Heart left ventricle (tissue), 16 donors: ENCODE measurements at regions of chr15 and their contacts with region 1.

Region 1: GRCh38 chr15:52256366-52256765 is 39.2 kb downstream of the MYO5C start:
- DNase-seq: peak in 4 of 5 donors; percentile 38 to 66 (median 60)
- ATAC-seq: peak; percentile 41 to 67 (median 54)
- H3K4me3 ChIP-seq: peak overlapping the region in 1 of 12 donors; percentile 3
- H3K27ac ChIP-seq: no peak overlapping the region
- H3K4me1 ChIP-seq: peaks cover 0 to 26% (median 12%) of the 10 kb centered on the region in 12 donors
- H3K27me3 ChIP-seq: no peaks in the 10 kb centered on the region
- CTCF ChIP-seq: peak; percentile 67 to 83 (median 74)
- POLR2A ChIP-seq: no peak

Region 2: GRCh38 chr15:52179278-52180195 is 76.8 kb before region 1 on chr15:
- intact Hi-C with region 1: no loop called
- DNase-seq: peak; percentile 72 to 91 (median 83)
- ATAC-seq: peak; percentile 70 to 92 (median 89)
- H3K4me3 ChIP-seq: peak overlapping the region; percentile 61 to 93 (median 74)
- H3K27ac ChIP-seq: peak overlapping the region; percentile 45 to 89 (median 74)
- H3K4me1 ChIP-seq: peaks cover 0 to 17% (median 8%) of the 10 kb centered on the region in 12 donors
- H3K27me3 ChIP-seq: no peaks in the 10 kb centered on the region
- CTCF ChIP-seq: no peak
- POLR2A ChIP-seq: no peak

Region 3: DNA sequence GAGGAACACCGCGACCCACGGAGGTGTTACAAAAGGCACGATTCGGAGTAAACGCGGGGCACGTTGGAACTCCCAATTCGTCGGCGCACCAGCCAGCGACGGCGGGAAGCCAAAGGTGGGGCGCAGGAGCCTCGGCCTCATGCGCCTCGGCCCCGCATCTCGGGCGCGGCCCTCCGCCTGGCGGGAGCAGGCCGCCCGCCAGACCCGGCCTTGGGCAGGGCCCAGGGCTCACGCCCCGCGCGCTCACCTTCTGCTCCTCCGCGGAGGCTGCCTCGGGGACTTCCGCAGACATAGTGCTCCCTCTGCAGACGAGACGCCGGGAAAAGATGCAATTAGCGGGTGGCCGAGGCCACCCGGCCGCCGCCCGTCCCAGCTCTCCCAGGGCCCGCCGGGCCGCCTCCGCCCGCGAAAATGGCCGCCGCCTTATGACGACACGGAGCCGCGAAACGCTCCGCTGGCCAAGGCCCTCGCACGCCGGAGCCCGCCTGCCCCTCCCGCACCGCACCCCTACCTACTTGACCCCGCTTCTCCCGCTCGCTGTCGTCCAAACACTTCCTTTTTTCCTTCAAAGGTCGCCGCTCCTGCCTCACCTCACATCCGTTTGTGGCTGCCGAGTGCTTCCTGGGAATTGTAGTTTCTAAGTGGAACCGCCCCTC is 312.4 kb after region 1 on chr15 and contains the start of gene ARPP19:
- intact Hi-C with region 1: loop called in 5 of 10 experiments (anchors 5 to 10 kb)
- DNase-seq: peak; percentile 88 to 94 (median 90)
- ATAC-seq: peak; percentile 80 to 96 (median 92)
- H3K4me3 ChIP-seq: peak within 1 kb of the TSS; percentile 63 to 94 (median 77)
- H3K27ac ChIP-seq: peak within 1 kb of the TSS; percentile 78 to 96 (median 94)
- H3K4me1 ChIP-seq: peaks cover 2 to 49% (median 33%) of the 10 kb centered on the region in 12 donors
- H3K27me3 ChIP-seq: no peaks in the 10 kb centered on the region
- CTCF ChIP-seq: peak in 8 of 12 donors; percentile 9 to 49 (median 21)
- POLR2A ChIP-seq: peak in 1 of 2 donors; percentile 76
- total RNA-seq, gene ARPP19: 77.2 to 182 (median 147) TPM